ENCODE measurements at regions of chr3 and their contacts with region 1.

Region 1: GRCh38 chr3:188788621-188789081 is 383.1 kb upstream of the TPRG1 start:
- DNase-seq: peak; percentile 88
- H3K4me3 Mint-ChIP-seq: no peak overlapping the region
- H3K27ac Mint-ChIP-seq: no peak overlapping the region
- H3K4me1 Mint-ChIP-seq: peaks cover 2% of the 10 kb centered on the region
- H3K27me3 Mint-ChIP-seq: no peaks in the 10 kb centered on the region

Region 2: DNA sequence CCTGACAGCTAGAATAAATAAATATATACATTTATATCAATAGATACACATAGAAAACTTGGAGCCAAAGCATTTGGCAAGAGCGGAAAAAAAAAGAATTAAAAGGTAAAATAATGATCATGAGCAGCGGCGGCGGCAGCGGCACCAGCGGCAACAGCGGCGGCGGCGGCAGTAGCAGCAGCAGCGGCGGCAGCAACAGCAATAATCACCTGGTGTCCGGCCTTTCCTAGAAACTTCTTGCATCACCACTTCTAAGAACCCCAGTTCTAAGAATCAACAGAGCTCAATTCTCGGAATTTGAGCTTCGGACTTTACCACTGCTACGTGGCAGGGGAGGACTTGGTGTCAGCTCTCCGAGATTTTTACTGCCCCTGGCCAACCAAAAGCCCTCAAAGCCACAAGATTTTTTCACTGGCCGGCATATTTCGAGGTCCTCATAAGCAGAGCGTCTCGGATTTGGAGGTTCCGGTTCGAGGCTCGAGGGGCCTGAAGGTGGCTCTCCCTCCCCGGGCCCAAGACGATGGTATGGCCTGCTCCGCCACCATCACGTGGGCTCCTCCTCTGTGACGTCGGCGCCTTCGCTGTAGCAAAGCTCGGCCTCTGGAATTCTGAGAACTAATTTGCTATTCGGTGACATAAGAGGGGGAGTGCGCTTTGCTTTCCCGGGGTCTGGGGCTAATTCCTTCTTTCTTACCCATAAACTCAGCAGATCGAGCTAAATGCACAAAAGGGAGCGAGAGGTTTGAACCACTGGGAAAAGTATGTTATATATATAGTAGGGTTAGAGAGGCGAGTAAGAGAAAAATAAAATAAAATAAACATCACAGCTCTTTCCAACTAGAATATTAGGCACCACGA is 1043.2 kb before region 1 on chr3 and contains the start of gene BCL6:
- CTCF ChIA-PET with region 1: interaction called, 10 read pairs
- POLR2A ChIA-PET with region 1: interaction called, 6 read pairs
- intact Hi-C with region 1: loop called (anchors 1 kb)
- DNase-seq: peak; percentile 91
- H3K4me3 Mint-ChIP-seq: peak within 1 kb of the TSS; percentile 90
- H3K27ac Mint-ChIP-seq: peak within 1 kb of the TSS; percentile 99
- H3K4me1 Mint-ChIP-seq: peaks cover 47% of the 10 kb centered on the region
- H3K27me3 Mint-ChIP-seq: no peaks in the 10 kb centered on the region
- total RNA-seq, gene BCL6: 41.4 to 51.3 TPM

Region 3: GRCh38 chr3:188037216-188037718 is 751.4 kb before region 1 on chr3:
- CTCF ChIA-PET with region 1: no interaction called
- POLR2A ChIA-PET with region 1: no interaction called
- intact Hi-C with region 1: no loop called
- DNase-seq: no peak
- H3K4me3 Mint-ChIP-seq: no peak overlapping the region
- H3K27ac Mint-ChIP-seq: no peak overlapping the region
- H3K4me1 Mint-ChIP-seq: peaks cover 10% of the 10 kb centered on the region
- H3K27me3 Mint-ChIP-seq: no peaks in the 10 kb centered on the region

Region 4: GRCh38 chr3:188257384-188258026 is 531.1 kb before region 1 on chr3:
- CTCF ChIA-PET with region 1: no interaction called
- POLR2A ChIA-PET with region 1: no interaction called
- intact Hi-C with region 1: loop called (anchors 1 kb)
- DNase-seq: no peak
- H3K4me3 Mint-ChIP-seq: no peak overlapping the region
- H3K27ac Mint-ChIP-seq: peak overlapping the region; percentile 47
- H3K4me1 Mint-ChIP-seq: peaks cover 49% of the 10 kb centered on the region
- H3K27me3 Mint-ChIP-seq: no peaks in the 10 kb centered on the region

Region 5: GRCh38 chr3:188516515-188516914 is 272.1 kb before region 1 on chr3:
- CTCF ChIA-PET with region 1: no interaction called
- POLR2A ChIA-PET with region 1: no interaction called
- intact Hi-C with region 1: loop called (anchors 1 kb)
- DNase-seq: peak; percentile 47
- H3K4me3 Mint-ChIP-seq: no peak overlapping the region
- H3K27ac Mint-ChIP-seq: no peak overlapping the region
- H3K4me1 Mint-ChIP-seq: peaks cover 13% of the 10 kb centered on the region
- H3K27me3 Mint-ChIP-seq: no peaks in the 10 kb centered on the region

Region 6: DNA sequence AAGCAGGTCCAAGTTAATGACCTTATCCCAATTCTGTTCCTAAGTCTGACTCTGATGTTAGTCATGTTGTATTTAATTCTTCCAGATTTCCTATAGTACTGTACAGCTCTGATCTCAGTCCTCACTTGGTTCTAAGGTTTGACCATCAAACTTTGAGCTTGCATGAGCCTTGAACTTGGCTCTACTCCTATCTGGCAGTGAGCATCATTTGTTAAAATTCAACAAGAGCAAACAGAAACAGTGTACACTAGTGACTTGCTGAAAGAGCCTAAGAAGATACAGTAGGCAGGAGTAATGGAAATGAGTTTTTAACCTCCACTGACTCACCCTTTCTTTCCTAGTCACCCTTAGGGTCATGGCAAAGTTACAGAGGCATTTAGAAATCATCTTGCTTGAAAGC is 68.0 kb before region 1 on chr3:
- CTCF ChIA-PET with region 1: no interaction called
- POLR2A ChIA-PET with region 1: no interaction called
- intact Hi-C with region 1: loop called (anchors 1 kb)
- DNase-seq: no peak
- H3K4me3 Mint-ChIP-seq: no peak overlapping the region
- H3K27ac Mint-ChIP-seq: no peak overlapping the region
- H3K4me1 Mint-ChIP-seq: peaks cover 39% of the 10 kb centered on the region
- H3K27me3 Mint-ChIP-seq: peaks cover 12% of the 10 kb centered on the region

Region 7: GRCh38 chr3:189013224-189013888 is 224.7 kb after region 1 on chr3:
- CTCF ChIA-PET with region 1: no interaction called
- POLR2A ChIA-PET with region 1: no interaction called
- intact Hi-C with region 1: loop called (anchors 1 kb)
- DNase-seq: no peak
- H3K4me3 Mint-ChIP-seq: no peak overlapping the region
- H3K27ac Mint-ChIP-seq: no peak overlapping the region
- H3K4me1 Mint-ChIP-seq: peaks cover 20% of the 10 kb centered on the region
- H3K27me3 Mint-ChIP-seq: peaks cover 11% of the 10 kb centered on the region

Region 8: GRCh38 chr3:190617185-190617584 is 1828.5 kb after region 1 on chr3:
- CTCF ChIA-PET with region 1: no interaction called
- POLR2A ChIA-PET with region 1: no interaction called
- intact Hi-C with region 1: loop called (anchors 5 kb)
- DNase-seq: peak; percentile 66
- H3K4me3 Mint-ChIP-seq: no peak overlapping the region
- H3K27ac Mint-ChIP-seq: peak overlapping the region; percentile 96
- H3K4me1 Mint-ChIP-seq: peaks cover 56% of the 10 kb centered on the region
- H3K27me3 Mint-ChIP-seq: no peaks in the 10 kb centered on the region

Measured in activated CD4-positive, alpha-beta memory T cell treated with anti-CD3 and anti-CD28 coated beads for 36 hours (primary cell).